AG04449 (cell line): ENCODE measurements at regions of chr10 and their contacts with region 1.

Region 1: DNA sequence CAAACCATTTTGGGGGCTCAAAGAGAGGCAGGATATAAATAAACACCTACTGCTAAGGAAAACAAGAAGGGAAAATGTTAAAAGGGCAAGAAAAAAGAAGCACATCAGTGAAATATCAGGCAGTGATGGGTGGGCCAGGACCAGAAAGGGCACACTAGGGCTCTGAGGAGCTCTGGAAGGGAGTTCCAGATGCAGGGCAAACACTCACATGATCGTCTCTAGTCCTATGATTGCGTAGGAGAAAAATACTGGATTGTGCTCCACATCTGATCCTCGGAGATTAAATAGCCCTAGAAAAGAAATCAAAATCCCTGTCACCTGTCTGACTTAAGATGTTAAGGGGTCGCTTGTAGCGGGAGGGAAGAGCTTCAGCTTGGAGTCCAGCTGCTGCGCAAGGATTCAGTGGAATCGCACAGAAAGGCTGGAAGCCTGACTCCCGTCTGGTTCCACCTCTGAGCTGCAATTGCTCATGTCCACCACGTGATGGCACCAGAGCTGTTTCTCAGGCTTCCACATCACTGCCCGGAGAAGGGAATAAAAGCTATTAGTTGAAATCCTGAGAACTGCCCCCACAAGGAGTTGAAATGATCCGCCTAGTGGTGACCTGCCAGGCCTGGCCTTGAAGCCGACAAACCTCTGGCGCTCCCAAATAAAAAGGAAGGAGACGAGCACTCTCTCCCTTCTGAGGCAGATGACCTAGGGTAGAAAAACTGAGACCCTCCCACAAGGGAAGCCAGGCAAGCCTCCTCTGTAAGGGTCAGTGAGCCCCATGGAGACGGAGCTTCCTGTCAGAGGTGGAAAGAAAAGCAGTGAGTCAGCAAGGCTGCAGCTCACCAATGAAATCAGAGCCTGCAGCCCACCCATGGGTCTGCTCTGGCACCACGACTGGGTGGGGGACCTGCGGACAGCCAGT is 39.2 kb downstream of the XPNPEP1 start:
- DNase-seq: peak; percentile 54
- H3K4me3 ChIP-seq: no peak overlapping the region
- CTCF ChIP-seq: peak; percentile 80

Region 2: GRCh38 chr10:109835257-109835656 is 48.9 kb before region 1 on chr10:
- CTCF ChIA-PET with region 1: no interaction called
- POLR2A ChIA-PET with region 1: no interaction called
- DNase-seq: no peak
- H3K4me3 ChIP-seq: no peak overlapping the region
- CTCF ChIP-seq: no peak

Region 3: GRCh38 chr10:109894516-109894915 is 10.4 kb after region 1 on chr10:
- CTCF ChIA-PET with region 1: interaction called, 74 read pairs
- POLR2A ChIA-PET with region 1: interaction called, 3 read pairs
- DNase-seq: no peak
- H3K4me3 ChIP-seq: no peak overlapping the region
- CTCF ChIP-seq: no peak

Region 4: GRCh38 chr10:109978481-109978880 is 94.4 kb after region 1 on chr10:
- CTCF ChIA-PET with region 1: interaction called, 20 read pairs
- POLR2A ChIA-PET with region 1: no interaction called
- DNase-seq: no peak
- H3K4me3 ChIP-seq: no peak overlapping the region
- CTCF ChIP-seq: peak; percentile 60

Region 5: GRCh38 chr10:110016039-110016438 is 131.9 kb after region 1 on chr10:
- CTCF ChIA-PET with region 1: interaction called, 50 read pairs
- POLR2A ChIA-PET with region 1: interaction called, 3 read pairs
- DNase-seq: no peak
- H3K4me3 ChIP-seq: no peak overlapping the region
- CTCF ChIP-seq: peak; percentile 18

Region 6: GRCh38 chr10:110076559-110077318 is 192.6 kb after region 1 on chr10:
- CTCF ChIA-PET with region 1: interaction called, 47 read pairs
- POLR2A ChIA-PET with region 1: no interaction called
- DNase-seq: no peak
- H3K4me3 ChIP-seq: no peak overlapping the region
- CTCF ChIP-seq: no peak

Region 7: GRCh38 chr10:110118891-110119621 is 234.9 kb after region 1 on chr10:
- CTCF ChIA-PET with region 1: interaction called, 12 read pairs
- POLR2A ChIA-PET with region 1: no interaction called
- DNase-seq: no peak
- H3K4me3 ChIP-seq: no peak overlapping the region
- CTCF ChIP-seq: no peak

Region 8: GRCh38 chr10:110279407-110279986 is 395.4 kb after region 1 on chr10:
- CTCF ChIA-PET with region 1: interaction called, 54 read pairs
- POLR2A ChIA-PET with region 1: interaction called, 3 read pairs
- DNase-seq: no peak
- H3K4me3 ChIP-seq: no peak overlapping the region
- CTCF ChIP-seq: peak; percentile 73